Dorsolateral prefrontal cortex (tissue), 120 donors: ENCODE measurements at regions of chr19 and their contacts with region 1.

Region 1: DNA sequence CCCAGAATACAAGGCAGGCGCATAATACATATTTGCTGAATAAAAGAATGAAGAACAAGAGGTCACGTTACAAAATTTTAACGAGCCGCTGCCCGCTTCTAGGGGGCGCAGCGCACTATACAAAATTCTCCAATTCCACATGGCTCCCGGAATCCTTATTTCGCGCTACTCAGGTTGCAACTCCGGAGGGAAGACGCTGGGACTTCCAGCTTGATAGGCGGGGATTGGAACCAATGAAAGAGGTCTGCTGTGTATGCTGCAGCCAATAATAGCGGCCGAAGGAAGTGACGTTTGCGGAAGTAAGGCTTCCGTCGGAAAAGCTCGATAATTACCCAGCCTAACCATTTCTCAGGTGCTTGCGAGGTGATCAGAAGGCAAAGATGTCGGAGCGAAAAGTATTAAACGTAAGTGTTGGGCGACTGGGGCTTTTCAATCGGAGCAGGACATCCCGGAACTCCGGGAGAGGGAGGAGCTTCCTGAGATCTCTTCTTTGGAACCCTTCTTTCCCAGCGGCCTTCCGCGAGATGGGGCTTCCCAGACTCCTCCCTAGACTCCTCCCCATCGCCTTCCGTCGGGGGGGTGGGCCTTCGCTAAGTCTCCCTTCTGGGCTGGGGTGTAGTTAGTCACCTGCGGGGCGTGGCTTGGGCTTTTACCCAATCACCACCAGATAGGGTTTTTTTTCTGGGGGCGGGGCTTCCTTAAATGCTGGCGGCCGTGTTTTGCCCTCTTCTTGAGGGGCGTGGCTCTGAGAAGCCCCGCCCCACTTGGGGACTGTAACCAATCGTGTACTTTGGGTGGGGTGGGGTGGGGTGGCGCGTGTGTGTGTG is at the start of gene YJU2:
- DNase-seq: peak; percentile 82 to 98 (median 95)
- H3K4me3 ChIP-seq: peak within 1 kb of the TSS; percentile 64 to 99 (median 83)
- H3K27ac ChIP-seq: peak within 1 kb of the TSS; percentile 80 to 99 (median 97)
- H3K27me3 ChIP-seq: no peaks in the 10 kb centered on the region
- CTCF ChIP-seq: peak; percentile 35 to 74 (median 60)
- total RNA-seq, gene YJU2: 13.4 to 26.3 (median 19.0) TPM

Region 2: DNA sequence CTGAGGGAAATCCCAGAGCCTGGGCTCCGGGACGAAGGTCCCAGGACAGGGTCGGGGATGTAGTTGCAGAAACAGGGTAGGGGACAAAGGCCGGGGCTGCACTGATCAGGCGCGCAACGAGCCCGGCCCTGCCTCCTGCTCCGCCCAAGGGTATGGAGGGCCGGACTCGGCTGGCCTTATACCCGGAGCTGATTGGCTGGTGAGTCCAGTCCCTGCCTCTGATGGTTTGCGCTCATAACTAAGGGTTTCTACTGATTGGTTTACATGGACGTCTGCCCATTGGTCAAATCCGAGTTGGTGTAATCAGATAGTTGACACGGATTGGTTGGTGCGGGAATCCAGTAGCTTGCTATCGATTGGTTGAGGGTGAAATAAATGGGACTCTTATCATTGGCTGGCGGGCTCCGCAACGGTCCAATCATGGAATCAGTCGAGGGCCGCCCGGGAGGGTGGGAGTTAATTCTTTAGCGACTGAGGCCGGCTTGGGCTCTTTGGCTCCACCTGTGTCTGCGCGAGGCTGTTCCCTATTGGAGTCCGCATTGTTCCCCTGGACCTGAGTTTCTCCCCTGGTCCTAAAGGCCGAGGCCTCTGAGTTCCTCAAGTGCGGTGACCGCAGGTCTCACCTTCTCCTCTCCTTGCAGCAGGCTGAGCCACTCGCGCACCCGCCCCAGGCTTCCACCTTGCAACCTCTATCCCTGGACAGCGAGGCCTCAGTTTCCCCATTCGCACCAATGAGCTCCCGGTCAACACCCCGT is 95.8 kb after region 1 on chr19:
- intact Hi-C with region 1: loop called in 1 of 2 experiments (anchors 2 kb)
- DNase-seq: peak; percentile 85 to 99 (median 97)
- H3K4me3 ChIP-seq: peak overlapping the region; percentile 58 to 90 (median 81)
- H3K27ac ChIP-seq: peak overlapping the region; percentile 76 to 99 (median 96)
- H3K27me3 ChIP-seq: no peaks in the 10 kb centered on the region
- CTCF ChIP-seq: peak in 21 of 56 donors; percentile 6 to 33 (median 17)

Region 3: GRCh38 chr19:4457654-4458395 is 210.8 kb after region 1 on chr19 and contains the start of gene UBXN6:
- intact Hi-C with region 1: loop called in 1 of 2 experiments (anchors 5 kb)
- DNase-seq: peak; percentile 97 to 99 (median 99)
- H3K4me3 ChIP-seq: peak within 1 kb of the TSS; percentile 52 to 85 (median 72)
- H3K27ac ChIP-seq: peak within 1 kb of the TSS in 57 of 59 donors; percentile 17 to 95 (median 83)
- H3K27me3 ChIP-seq: no peaks in the 10 kb centered on the region
- CTCF ChIP-seq: peak in 47 of 56 donors; percentile 11 to 65 (median 35)
- total RNA-seq, gene UBXN6: 110 to 244 (median 164) TPM